H1 (cell line): ENCODE measurements at regions of chr17 and their contacts with region 1.

Region 1: GRCh38 chr17:4215882-4216570 is 47.8 kb downstream of the ANKFY1 start:
- DNase-seq: no peak
- H3K4me3 ChIP-seq: no peak overlapping the region
- H3K27ac ChIP-seq: no peak overlapping the region
- H3K4me1 ChIP-seq: no peaks in the 10 kb centered on the region
- H3K27me3 ChIP-seq: no peaks in the 10 kb centered on the region
- CTCF ChIP-seq: no peak
- EP300 ChIP-seq: no peak
- POLR2A ChIP-seq: no peak
- RAD21 ChIP-seq: no peak

Region 2: GRCh38 chr17:4199818-4200402 is 16.1 kb before region 1 on chr17:
- CTCF ChIA-PET with region 1: interaction called, 20 read pairs
- POLR2A ChIA-PET with region 1: no interaction called
- DNase-seq: no peak
- H3K4me3 ChIP-seq: no peak overlapping the region
- H3K27ac ChIP-seq: no peak overlapping the region
- H3K4me1 ChIP-seq: no peaks in the 10 kb centered on the region
- H3K27me3 ChIP-seq: no peaks in the 10 kb centered on the region
- CTCF ChIP-seq: peak; percentile 49 to 77 (median 68)
- EP300 ChIP-seq: no peak
- POLR2A ChIP-seq: no peak
- RAD21 ChIP-seq: peak; percentile 56 to 63

Region 3: GRCh38 chr17:4263282-4264215 is 47.5 kb after region 1 on chr17 and contains the start of gene ANKFY1:
- CTCF ChIA-PET with region 1: interaction called, 18 read pairs
- POLR2A ChIA-PET with region 1: no interaction called
- DNase-seq: peak; percentile 79 to 99
- H3K4me3 ChIP-seq: peak within 1 kb of the TSS; percentile 65 to 99 (median 82)
- H3K27ac ChIP-seq: peak within 1 kb of the TSS; percentile 92
- H3K4me1 ChIP-seq: peaks cover 0 to 14% (median 5%) of the 10 kb centered on the region in 4 experiments
- H3K27me3 ChIP-seq: no peaks in the 10 kb centered on the region
- CTCF ChIP-seq: no peak
- EP300 ChIP-seq: no peak
- POLR2A ChIP-seq: peak; percentile 65 to 91
- RAD21 ChIP-seq: no peak
- total RNA-seq, gene ANKFY1: 44.9 and 45.3 TPM in 2 replicates

Region 4: DNA sequence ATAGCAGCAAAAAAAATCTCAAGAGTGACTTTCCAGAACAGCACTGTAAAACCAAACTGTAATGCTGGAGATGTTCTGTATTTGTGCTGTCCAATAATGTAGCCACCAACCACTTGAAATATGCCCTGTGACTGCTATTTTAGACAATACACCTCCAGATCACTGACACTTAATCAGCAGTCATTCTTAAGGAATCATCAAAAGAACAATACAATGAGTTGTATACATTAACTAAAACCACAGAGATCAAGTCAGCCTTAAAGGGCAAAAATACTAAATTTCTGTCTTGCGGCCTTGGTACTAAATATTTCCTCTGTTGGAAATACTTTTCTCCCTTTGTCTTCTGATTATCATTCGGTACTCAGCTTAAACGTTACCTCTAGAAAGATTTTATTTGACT is 81.3 kb after region 1 on chr17:
- CTCF ChIA-PET with region 1: interaction called, 10 read pairs
- POLR2A ChIA-PET with region 1: no interaction called
- DNase-seq: no peak
- H3K4me3 ChIP-seq: no peak overlapping the region
- H3K27ac ChIP-seq: no peak overlapping the region
- H3K4me1 ChIP-seq: no peaks in the 10 kb centered on the region
- H3K27me3 ChIP-seq: no peaks in the 10 kb centered on the region
- CTCF ChIP-seq: no peak
- EP300 ChIP-seq: no peak
- POLR2A ChIP-seq: no peak
- RAD21 ChIP-seq: no peak

Region 5: DNA sequence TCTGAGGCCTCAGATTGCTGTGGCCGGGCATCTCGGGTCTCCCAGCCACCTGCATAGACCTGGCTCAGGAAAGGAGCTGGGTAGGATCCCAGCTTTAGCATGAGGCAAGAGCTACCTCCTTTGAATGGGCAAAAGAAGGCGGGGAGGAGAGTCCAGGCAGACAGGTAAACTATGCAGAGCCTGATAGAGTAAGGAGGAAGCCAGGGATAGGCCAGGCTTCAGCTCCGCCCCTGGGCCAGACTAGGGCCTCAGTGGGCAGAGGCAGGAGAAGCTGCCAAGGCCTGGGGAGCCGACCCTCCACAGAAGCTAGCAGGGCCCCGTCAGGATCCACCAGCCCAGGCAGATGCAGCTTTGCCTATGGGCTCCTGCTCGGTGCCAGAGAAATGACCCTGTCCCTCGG is 173.1 kb after region 1 on chr17:
- CTCF ChIA-PET with region 1: no interaction called
- POLR2A ChIA-PET with region 1: no interaction called
- DNase-seq: peak in 1 of 2 experiments; percentile 63
- H3K4me3 ChIP-seq: no peak overlapping the region
- H3K27ac ChIP-seq: peak overlapping the region; percentile 17; the same call in 1 of the 2 replicates
- H3K4me1 ChIP-seq: peaks cover 0 to 14% (median 7%) of the 10 kb centered on the region in 4 experiments; a peak in 6 of 7 replicates
- H3K27me3 ChIP-seq: no peaks in the 10 kb centered on the region
- CTCF ChIP-seq: no peak
- EP300 ChIP-seq: no peak
- POLR2A ChIP-seq: peak in 1 of 2 experiments; percentile 52; a peak in 1 of 3 replicates
- RAD21 ChIP-seq: no peak

Region 6: GRCh38 chr17:4420692-4421131 is 204.7 kb after region 1 on chr17:
- CTCF ChIA-PET with region 1: interaction called, 17 read pairs
- POLR2A ChIA-PET with region 1: no interaction called
- DNase-seq: peak in 1 of 2 experiments; percentile 74
- H3K4me3 ChIP-seq: no peak overlapping the region
- H3K27ac ChIP-seq: no peak overlapping the region
- H3K4me1 ChIP-seq: no peaks in the 10 kb centered on the region
- H3K27me3 ChIP-seq: no peaks in the 10 kb centered on the region; a peak in 1 of 7 replicates
- CTCF ChIP-seq: peak; percentile 83 to 95 (median 86)
- EP300 ChIP-seq: no peak
- POLR2A ChIP-seq: no peak
- RAD21 ChIP-seq: peak; percentile 88 to 93